ENCODE measurements at regions of chr4 and their contacts with region 1.

Region 1: GRCh38 chr4:113394730-113395530 is 345.5 kb downstream of the ANK2 start:
- DNase-seq: peak; percentile 80
- ATAC-seq: peak; percentile 75
- H3K4me3 ChIP-seq: no peak overlapping the region
- H3K4me3 Mint-ChIP-seq: no peak overlapping the region
- H3K27ac ChIP-seq: no peak overlapping the region
- H3K27ac Mint-ChIP-seq: no peak overlapping the region
- H3K4me1 ChIP-seq: no peaks in the 10 kb centered on the region
- H3K4me1 Mint-ChIP-seq: peaks cover 2% of the 10 kb centered on the region
- H3K27me3 ChIP-seq: no peaks in the 10 kb centered on the region
- H3K27me3 Mint-ChIP-seq: no peaks in the 10 kb centered on the region
- CTCF ChIP-seq: peak; percentile 94

Region 2: DNA sequence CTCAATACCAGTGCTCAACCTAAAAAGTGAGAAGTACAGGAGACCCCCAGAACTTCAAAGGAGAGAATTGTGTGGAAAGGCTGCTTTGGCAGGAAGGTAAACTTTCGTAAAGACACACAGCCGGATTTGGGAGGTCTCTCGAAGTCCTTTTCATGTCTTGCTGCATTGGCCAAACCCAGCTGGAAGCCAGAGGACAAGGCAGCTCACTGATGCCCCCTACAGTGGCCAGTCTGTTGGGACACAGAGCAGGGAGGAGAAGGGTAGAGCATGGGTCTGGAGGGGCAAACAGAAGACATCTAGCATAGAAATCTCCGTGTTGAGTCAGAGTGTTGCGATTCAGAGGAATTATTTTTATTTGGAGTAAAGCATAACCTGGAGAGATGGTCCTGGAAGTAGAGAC is 146.6 kb before region 1 on chr4:
- CTCF ChIA-PET with region 1: no interaction called
- POLR2A ChIA-PET with region 1: no interaction called
- intact Hi-C with region 1: no loop called
- DNase-seq: no peak
- ATAC-seq: no peak
- H3K4me3 ChIP-seq: no peak overlapping the region
- H3K4me3 Mint-ChIP-seq: no peak overlapping the region
- H3K27ac ChIP-seq: no peak overlapping the region
- H3K27ac Mint-ChIP-seq: no peak overlapping the region
- H3K4me1 ChIP-seq: no peaks in the 10 kb centered on the region
- H3K4me1 Mint-ChIP-seq: no peaks in the 10 kb centered on the region
- H3K27me3 ChIP-seq: no peaks in the 10 kb centered on the region
- H3K27me3 Mint-ChIP-seq: no peaks in the 10 kb centered on the region
- CTCF ChIP-seq: no peak

Region 3: GRCh38 chr4:113593400-113594230 is 198.7 kb after region 1 on chr4:
- CTCF ChIA-PET with region 1: no interaction called
- POLR2A ChIA-PET with region 1: no interaction called
- intact Hi-C with region 1: no loop called
- DNase-seq: peak; percentile 57
- ATAC-seq: peak; percentile 82
- H3K4me3 ChIP-seq: no peak overlapping the region
- H3K4me3 Mint-ChIP-seq: peak overlapping the region; percentile 53
- H3K27ac ChIP-seq: peak overlapping the region; percentile 75 to 85
- H3K27ac Mint-ChIP-seq: peak overlapping the region; percentile 88
- H3K4me1 ChIP-seq: peaks cover 44 to 55% of the 10 kb centered on the region in 2 donors
- H3K4me1 Mint-ChIP-seq: peaks cover 71% of the 10 kb centered on the region
- H3K27me3 ChIP-seq: no peaks in the 10 kb centered on the region
- H3K27me3 Mint-ChIP-seq: no peaks in the 10 kb centered on the region
- CTCF ChIP-seq: no peak

Region 4: DNA sequence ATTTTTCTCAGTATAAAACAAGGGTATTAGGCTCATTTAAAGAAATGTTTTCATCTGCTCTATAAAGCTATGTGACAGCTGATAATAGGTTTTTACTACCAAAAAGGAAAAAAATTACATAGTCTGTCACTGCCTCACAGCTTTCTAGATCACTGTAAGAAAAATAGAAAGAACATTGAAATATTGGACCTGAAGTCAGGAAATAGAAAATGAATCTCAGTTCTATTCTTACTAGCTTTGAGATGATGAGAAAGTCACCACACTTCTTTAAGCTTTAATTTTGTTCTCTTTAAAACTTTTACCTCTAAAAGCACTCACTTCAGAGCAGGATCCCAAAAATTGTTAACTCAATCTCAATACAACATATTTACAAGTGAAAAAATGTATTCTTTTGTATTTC is 411.9 kb after region 1 on chr4:
- CTCF ChIA-PET with region 1: no interaction called
- POLR2A ChIA-PET with region 1: no interaction called
- intact Hi-C with region 1: no loop called
- DNase-seq: no peak
- ATAC-seq: no peak
- H3K4me3 ChIP-seq: no peak overlapping the region
- H3K4me3 Mint-ChIP-seq: no peak overlapping the region
- H3K27ac ChIP-seq: no peak overlapping the region
- H3K27ac Mint-ChIP-seq: no peak overlapping the region
- H3K4me1 ChIP-seq: no peaks in the 10 kb centered on the region
- H3K4me1 Mint-ChIP-seq: no peaks in the 10 kb centered on the region
- H3K27me3 ChIP-seq: peaks cover 0 to 4% (median 0%) of the 10 kb centered on the region in 4 experiments
- H3K27me3 Mint-ChIP-seq: no peaks in the 10 kb centered on the region
- CTCF ChIP-seq: no peak

Region 5: DNA sequence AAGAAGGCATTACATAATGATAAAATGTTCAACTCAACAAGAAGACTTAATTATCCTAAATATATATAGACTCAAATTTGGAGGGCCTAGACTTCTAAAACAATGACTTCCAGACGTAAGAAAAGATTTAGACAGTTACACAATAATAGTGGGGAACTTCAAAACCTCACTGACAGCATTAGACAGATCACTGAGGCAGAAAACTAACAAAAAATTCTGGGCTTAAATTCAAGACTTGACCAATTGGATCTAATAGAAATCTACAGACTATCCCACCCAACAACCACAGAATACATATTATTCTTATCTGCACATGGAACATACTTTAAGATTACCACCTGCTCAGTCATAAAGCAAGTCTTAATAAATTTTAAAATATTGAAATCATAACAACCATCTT is 677.9 kb after region 1 on chr4:
- CTCF ChIA-PET with region 1: interaction called, 45 read pairs
- POLR2A ChIA-PET with region 1: no interaction called
- intact Hi-C with region 1: no loop called
- DNase-seq: no peak
- ATAC-seq: no peak
- H3K4me3 ChIP-seq: no peak overlapping the region
- H3K4me3 Mint-ChIP-seq: no peak overlapping the region
- H3K27ac ChIP-seq: no peak overlapping the region
- H3K27ac Mint-ChIP-seq: no peak overlapping the region
- H3K4me1 ChIP-seq: no peaks in the 10 kb centered on the region
- H3K4me1 Mint-ChIP-seq: no peaks in the 10 kb centered on the region
- H3K27me3 ChIP-seq: peaks cover 0 to 4% (median 0%) of the 10 kb centered on the region in 4 experiments
- H3K27me3 Mint-ChIP-seq: peaks cover 18% of the 10 kb centered on the region
- CTCF ChIP-seq: no peak

Region 6: DNA sequence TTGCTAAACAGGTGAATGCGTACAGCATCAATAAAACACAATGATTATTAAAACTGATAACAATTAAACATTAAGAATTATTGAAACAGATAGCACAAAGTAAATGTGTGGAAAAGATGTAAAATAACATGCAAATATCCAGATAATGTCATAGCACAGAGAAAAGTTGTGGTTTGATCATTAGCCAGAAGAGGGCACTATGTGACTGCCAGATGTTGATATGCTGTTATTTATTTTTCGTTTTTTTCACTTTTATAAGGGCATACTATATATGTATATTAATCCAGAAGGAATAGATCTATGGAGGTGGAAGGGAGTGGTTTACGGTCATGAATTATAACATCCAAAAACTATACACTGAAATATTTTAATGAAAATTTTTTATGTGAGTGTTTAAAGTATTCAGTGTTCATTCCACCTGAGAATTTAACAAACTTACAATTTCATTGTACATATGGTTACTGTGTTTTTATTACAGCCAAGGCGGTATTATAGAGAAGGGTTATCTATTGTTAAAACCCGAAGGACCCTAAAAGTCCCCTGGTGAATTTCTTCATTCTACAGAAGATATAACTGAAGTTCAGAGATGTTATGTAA is 991.8 kb after region 1 on chr4:
- CTCF ChIA-PET with region 1: interaction called, 78 read pairs
- POLR2A ChIA-PET with region 1: no interaction called
- intact Hi-C with region 1: no loop called
- DNase-seq: peak; percentile 59
- ATAC-seq: no peak
- H3K4me3 ChIP-seq: no peak overlapping the region
- H3K4me3 Mint-ChIP-seq: no peak overlapping the region
- H3K27ac ChIP-seq: no peak overlapping the region
- H3K27ac Mint-ChIP-seq: no peak overlapping the region
- H3K4me1 ChIP-seq: no peaks in the 10 kb centered on the region
- H3K4me1 Mint-ChIP-seq: no peaks in the 10 kb centered on the region
- H3K27me3 ChIP-seq: peaks cover 0 to 3% (median 0%) of the 10 kb centered on the region in 4 experiments
- H3K27me3 Mint-ChIP-seq: peaks cover 20% of the 10 kb centered on the region
- CTCF ChIP-seq: peak; percentile 96

Region 7: GRCh38 chr4:114694770-114695169 is 1299.8 kb after region 1 on chr4:
- CTCF ChIA-PET with region 1: interaction called, 8 read pairs
- POLR2A ChIA-PET with region 1: no interaction called
- intact Hi-C with region 1: loop called (anchors 2 kb)
- DNase-seq: peak; percentile 54
- ATAC-seq: no peak
- H3K4me3 ChIP-seq: no peak overlapping the region
- H3K4me3 Mint-ChIP-seq: no peak overlapping the region
- H3K27ac ChIP-seq: no peak overlapping the region
- H3K27ac Mint-ChIP-seq: no peak overlapping the region
- H3K4me1 ChIP-seq: peaks cover 0 to 6% of the 10 kb centered on the region in 2 donors
- H3K4me1 Mint-ChIP-seq: peaks cover 15% of the 10 kb centered on the region
- H3K27me3 ChIP-seq: no peaks in the 10 kb centered on the region
- H3K27me3 Mint-ChIP-seq: no peaks in the 10 kb centered on the region
- CTCF ChIP-seq: peak; percentile 86